ENCODE measurements at regions of chr19 and their contacts with region 1.

Region 1: DNA sequence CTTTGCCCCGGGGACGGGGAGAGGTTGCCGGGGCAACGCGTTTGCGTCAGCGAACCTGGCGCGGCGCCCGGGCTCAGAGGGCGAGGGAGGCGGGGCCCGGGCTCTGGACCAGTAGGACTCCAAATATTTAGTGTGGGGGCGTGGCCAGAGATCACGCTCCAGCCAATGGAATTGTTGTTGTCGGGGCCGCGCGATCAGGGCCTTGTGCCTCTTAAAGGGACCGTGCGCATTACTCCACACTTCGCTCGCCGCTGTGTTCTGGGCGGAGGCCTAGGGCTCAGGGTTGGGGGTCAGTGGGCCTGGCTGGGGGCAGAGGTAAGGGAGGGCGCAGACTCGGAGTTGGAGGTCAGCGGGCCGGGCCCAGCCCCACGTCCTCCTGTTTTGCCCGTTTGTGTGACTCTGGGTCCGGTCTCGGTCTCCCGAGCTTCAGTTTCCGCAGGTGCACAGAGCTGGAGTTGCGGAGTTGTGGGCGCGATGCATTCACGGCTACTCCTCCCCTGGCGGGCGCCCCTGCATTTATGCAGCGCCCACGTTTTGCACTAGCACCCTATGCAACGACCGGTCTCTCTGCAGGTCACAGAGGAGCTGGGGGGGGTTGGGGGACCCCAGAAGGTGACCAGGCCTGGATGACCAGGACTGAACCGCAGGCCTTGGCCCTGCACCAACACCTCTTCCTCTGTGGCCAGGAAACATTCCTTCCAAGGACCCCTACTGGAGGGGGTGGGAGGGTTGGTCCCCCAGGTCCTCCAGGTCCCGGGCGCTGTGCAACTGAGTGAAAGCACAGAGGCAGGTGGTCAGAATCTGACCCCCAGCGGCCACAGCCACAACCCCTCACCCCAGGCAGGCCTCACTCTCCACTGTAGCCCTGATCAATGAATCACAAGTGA is 10.7 kb upstream of the MKNK2 start:
- DNase-seq: peak; percentile 100
- H3K4me3 Mint-ChIP-seq: peak overlapping the region; percentile 92
- H3K27ac Mint-ChIP-seq: peak overlapping the region; percentile 93
- H3K4me1 Mint-ChIP-seq: peaks cover 43% of the 10 kb centered on the region
- H3K27me3 Mint-ChIP-seq: no peaks in the 10 kb centered on the region

Region 2: GRCh38 chr19:2050991-2051772 is 10.6 kb before region 1 on chr19 and contains the start of gene MKNK2:
- CTCF ChIA-PET with region 1: interaction called, 12 read pairs
- POLR2A ChIA-PET with region 1: no interaction called
- DNase-seq: peak; percentile 92
- H3K4me3 Mint-ChIP-seq: peak within 1 kb of the TSS; percentile 83
- H3K27ac Mint-ChIP-seq: peak within 1 kb of the TSS; percentile 91
- H3K4me1 Mint-ChIP-seq: peaks cover 52% of the 10 kb centered on the region
- H3K27me3 Mint-ChIP-seq: no peaks in the 10 kb centered on the region
- total RNA-seq, gene MKNK2: 198 to 228 TPM

Region 3: DNA sequence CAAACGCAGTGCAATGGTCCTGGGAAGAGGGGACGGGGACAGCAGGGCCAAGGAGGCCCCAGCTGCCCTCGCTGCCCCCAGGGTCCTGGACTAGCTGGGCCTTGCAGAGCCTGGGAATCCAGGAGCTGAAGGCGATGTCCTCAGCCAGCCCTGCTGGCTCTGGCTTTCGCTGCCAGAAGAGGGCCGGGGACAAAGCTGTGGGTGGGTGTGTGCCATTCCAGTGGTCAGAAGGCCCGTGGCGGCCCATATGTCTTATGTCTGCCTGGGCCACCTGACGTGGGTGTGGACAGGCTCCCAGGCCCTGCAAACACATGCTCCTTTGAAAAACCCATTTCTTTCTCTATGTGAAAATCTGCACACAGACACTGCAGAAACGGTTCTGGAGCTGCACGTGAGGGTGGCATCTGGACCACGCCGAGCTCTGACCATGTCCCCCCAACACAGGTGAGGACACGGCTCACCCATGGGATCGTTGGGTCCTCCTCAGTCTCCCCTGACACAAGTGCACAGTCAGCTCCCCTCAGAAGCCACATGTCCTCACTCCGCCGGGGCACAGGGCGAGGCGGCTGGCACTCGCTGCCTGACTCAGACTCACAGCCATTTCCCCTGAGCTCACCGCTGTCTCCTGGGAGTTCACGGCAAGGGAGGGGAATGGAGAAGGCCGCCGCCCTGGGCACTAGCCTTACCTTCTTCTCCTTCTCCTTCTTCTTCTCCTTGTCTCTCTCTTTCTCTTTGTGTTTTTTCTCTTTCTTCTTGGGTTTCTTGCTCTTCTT is 51.9 kb after region 1 on chr19:
- CTCF ChIA-PET with region 1: no interaction called
- POLR2A ChIA-PET with region 1: no interaction called
- DNase-seq: no peak
- H3K4me3 Mint-ChIP-seq: no peak overlapping the region
- H3K27ac Mint-ChIP-seq: no peak overlapping the region
- H3K4me1 Mint-ChIP-seq: no peaks in the 10 kb centered on the region
- H3K27me3 Mint-ChIP-seq: no peaks in the 10 kb centered on the region